ENCODE measurements at regions of chr20 and their contacts with region 1.

Region 1: GRCh38 chr20:2914160-2914559 is 40.9 kb downstream of the PTPRA start:
- DNase-seq: no peak
- ATAC-seq: peak in 3 of 4 donors; percentile 45 to 72 (median 53)
- H3K4me3 ChIP-seq: no peak overlapping the region
- H3K27ac ChIP-seq: no peak overlapping the region
- H3K4me1 ChIP-seq: peaks cover 4 to 13% (median 7%) of the 10 kb centered on the region in 3 donors
- H3K27me3 ChIP-seq: no peaks in the 10 kb centered on the region
- CTCF ChIP-seq: no peak

Region 2: DNA sequence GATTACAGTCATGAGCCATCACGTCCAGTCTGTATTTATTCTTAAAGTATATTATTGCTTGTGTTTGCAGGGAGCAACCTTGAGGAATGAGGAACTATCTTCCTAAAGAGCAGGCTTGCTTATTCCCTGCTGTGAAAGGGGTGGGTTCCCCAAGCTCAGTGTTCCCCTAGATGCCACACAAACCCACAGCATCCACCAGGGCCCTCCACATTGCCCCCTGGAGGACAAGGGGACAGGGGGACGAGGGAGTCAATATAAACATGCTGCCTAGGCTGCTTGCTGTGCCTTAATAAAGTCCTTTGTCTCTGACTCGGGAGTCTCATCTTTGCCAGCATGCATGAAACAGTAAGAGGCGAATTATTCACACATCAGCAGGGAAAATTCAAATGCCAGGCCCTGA is 242.2 kb before region 1 on chr20:
- intact Hi-C with region 1: no loop called
- DNase-seq: no peak
- ATAC-seq: no peak
- H3K4me3 ChIP-seq: no peak overlapping the region
- H3K27ac ChIP-seq: no peak overlapping the region
- H3K4me1 ChIP-seq: no peaks in the 10 kb centered on the region
- H3K27me3 ChIP-seq: no peaks in the 10 kb centered on the region
- CTCF ChIP-seq: no peak

Region 3: GRCh38 chr20:2967841-2968240 is 53.7 kb after region 1 on chr20:
- intact Hi-C with region 1: loop called in 1 of 3 experiments (anchors 10 kb)
- DNase-seq: no peak
- ATAC-seq: no peak
- H3K4me3 ChIP-seq: no peak overlapping the region
- H3K27ac ChIP-seq: no peak overlapping the region
- H3K4me1 ChIP-seq: no peaks in the 10 kb centered on the region
- H3K27me3 ChIP-seq: no peaks in the 10 kb centered on the region
- CTCF ChIP-seq: no peak